ENCODE measurements at regions of chrX and their contacts with region 1.

Region 1: DNA sequence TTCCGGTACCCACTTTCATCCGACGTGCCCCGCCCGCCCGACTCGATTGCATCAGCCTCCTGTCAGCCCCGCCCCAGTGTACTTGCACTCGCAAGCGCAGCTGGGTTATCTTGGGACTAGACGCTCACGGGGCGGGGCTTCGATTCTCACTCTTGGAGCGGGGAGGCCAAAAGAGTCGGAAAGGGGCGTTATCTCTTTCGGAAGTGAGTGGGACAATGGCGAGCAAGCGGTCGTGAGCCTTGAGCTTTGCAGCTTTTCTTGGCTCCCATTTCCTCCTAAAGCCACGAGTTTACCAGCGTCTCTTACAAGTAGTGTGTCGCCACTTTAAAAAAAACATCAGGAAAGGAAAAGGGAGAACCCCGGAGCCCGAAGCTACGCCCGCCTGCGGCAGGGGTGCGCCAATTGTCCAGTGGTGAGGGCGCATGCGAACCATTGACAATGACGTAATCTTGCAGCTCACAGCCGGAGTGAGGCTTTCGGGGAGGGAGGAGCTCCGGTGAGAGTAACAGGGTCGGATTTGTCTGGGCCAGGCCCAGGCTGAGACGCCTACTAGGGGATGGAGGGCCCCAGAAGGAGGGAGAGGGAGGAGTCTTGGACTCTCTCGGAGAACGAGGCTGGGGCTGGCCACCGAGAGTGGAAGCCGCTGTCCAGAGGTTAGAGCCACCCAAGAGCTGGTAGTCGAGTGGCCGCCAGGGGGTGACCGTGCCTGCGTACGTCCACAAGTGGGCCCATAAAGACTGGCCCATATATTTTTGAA is 109.5 kb downstream of the GNL3L start:
- DNase-seq: peak; percentile 82 to 96 (median 90)
- ATAC-seq: peak; percentile 88
- H3K4me3 ChIP-seq: peak overlapping the region; percentile 60
- H3K4me3 Mint-ChIP-seq: peak overlapping the region; percentile 94
- H3K27ac ChIP-seq: peak overlapping the region; percentile 93 to 95
- H3K27ac Mint-ChIP-seq: peak overlapping the region; percentile 98
- H3K4me1 ChIP-seq: peaks cover 14% of the 10 kb centered on the region
- H3K4me1 Mint-ChIP-seq: peaks cover 14% of the 10 kb centered on the region
- H3K27me3 ChIP-seq: no peaks in the 10 kb centered on the region
- H3K27me3 Mint-ChIP-seq: no peaks in the 10 kb centered on the region
- CTCF ChIP-seq: peak; percentile 47

Region 2: DNA sequence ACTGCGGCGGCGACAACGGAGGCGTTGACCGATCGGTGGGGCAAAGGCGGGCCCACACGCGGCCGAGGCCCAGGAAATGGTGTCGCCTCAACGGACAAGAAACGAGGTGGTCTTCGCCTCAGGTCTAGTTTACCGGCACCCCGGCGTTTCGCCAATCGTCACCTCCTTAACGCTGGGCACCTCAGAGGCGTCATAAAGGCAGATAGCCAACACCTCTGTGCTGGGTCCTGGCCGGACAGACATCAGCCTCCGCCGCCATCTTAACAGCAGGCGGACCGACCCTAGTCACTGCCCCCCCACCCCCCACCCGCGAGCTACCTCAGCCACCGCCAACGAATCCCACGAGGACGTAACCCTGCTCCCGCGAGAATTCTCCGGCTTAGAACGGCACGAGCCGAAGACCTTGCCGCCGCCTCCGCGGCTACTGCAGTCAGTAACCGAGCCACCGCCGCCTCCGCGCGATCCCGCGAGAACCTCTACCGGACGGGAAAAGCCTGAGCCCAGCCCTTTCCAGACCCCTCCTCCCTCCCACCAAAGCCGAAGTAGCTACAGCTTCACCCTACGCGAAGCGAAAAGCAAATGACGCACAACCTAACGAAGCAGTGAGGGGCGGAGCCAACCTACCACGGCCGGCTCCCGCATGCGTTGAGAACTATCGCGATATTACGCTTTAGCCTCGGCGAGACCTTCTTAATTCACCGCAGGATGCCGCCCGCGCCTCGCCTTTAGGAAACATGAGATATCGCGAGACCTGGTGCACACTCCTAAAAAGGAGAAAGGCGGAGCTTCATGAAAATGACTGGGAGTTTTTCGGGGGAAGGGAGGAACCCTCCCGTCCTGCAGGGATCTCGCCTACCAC is 955.7 kb before region 1 on chrX:
- CTCF ChIA-PET with region 1: interaction called, 3 read pairs
- POLR2A ChIA-PET with region 1: interaction called, 15 read pairs
- intact Hi-C with region 1: no loop called
- DNase-seq: peak; percentile 77 to 98 (median 86)
- ATAC-seq: peak; percentile 78
- H3K4me3 ChIP-seq: peak overlapping the region; percentile 90
- H3K4me3 Mint-ChIP-seq: peak overlapping the region; percentile 95
- H3K27ac ChIP-seq: peak overlapping the region; percentile 75 to 98
- H3K27ac Mint-ChIP-seq: peak overlapping the region; percentile 99
- H3K4me1 ChIP-seq: peaks cover 18% of the 10 kb centered on the region
- H3K4me1 Mint-ChIP-seq: peaks cover 63% of the 10 kb centered on the region
- H3K27me3 ChIP-seq: no peaks in the 10 kb centered on the region
- H3K27me3 Mint-ChIP-seq: no peaks in the 10 kb centered on the region
- CTCF ChIP-seq: no peak

Region 3: GRCh38 chrX:54439967-54440871 is 199.3 kb before region 1 on chrX and contains the start of gene TSR2:
- CTCF ChIA-PET with region 1: interaction called, 3 read pairs
- POLR2A ChIA-PET with region 1: interaction called, 26 read pairs
- intact Hi-C with region 1: loop called in 1 of 2 experiments (anchors 5 kb)
- DNase-seq: peak; percentile 58 to 90 (median 68)
- ATAC-seq: peak; percentile 96
- H3K4me3 ChIP-seq: peak within 1 kb of the TSS; percentile 87
- H3K4me3 Mint-ChIP-seq: peak within 1 kb of the TSS; percentile 95
- H3K27ac ChIP-seq: peak within 1 kb of the TSS; percentile 47 to 56
- H3K27ac Mint-ChIP-seq: peak within 1 kb of the TSS; percentile 85
- H3K4me1 ChIP-seq: peaks cover 25% of the 10 kb centered on the region
- H3K4me1 Mint-ChIP-seq: peaks cover 32% of the 10 kb centered on the region
- H3K27me3 ChIP-seq: no peaks in the 10 kb centered on the region
- H3K27me3 Mint-ChIP-seq: no peaks in the 10 kb centered on the region
- CTCF ChIP-seq: no peak
- total RNA-seq, gene TSR2: 36.3 to 36.5 TPM

Region 4: GRCh38 chrX:54786962-54787361 is 147.4 kb after region 1 on chrX:
- CTCF ChIA-PET with region 1: no interaction called
- POLR2A ChIA-PET with region 1: interaction called, 5 read pairs
- intact Hi-C with region 1: loop called in 1 of 2 experiments (anchors 5 kb)
- DNase-seq: peak; percentile 8 to 54 (median 32)
- ATAC-seq: peak; percentile 76
- H3K4me3 ChIP-seq: no peak overlapping the region
- H3K4me3 Mint-ChIP-seq: no peak overlapping the region
- H3K27ac ChIP-seq: no peak overlapping the region
- H3K27ac Mint-ChIP-seq: no peak overlapping the region
- H3K4me1 ChIP-seq: no peaks in the 10 kb centered on the region
- H3K4me1 Mint-ChIP-seq: no peaks in the 10 kb centered on the region
- H3K27me3 ChIP-seq: no peaks in the 10 kb centered on the region
- H3K27me3 Mint-ChIP-seq: no peaks in the 10 kb centered on the region
- CTCF ChIP-seq: peak; percentile 38

Region 5: DNA sequence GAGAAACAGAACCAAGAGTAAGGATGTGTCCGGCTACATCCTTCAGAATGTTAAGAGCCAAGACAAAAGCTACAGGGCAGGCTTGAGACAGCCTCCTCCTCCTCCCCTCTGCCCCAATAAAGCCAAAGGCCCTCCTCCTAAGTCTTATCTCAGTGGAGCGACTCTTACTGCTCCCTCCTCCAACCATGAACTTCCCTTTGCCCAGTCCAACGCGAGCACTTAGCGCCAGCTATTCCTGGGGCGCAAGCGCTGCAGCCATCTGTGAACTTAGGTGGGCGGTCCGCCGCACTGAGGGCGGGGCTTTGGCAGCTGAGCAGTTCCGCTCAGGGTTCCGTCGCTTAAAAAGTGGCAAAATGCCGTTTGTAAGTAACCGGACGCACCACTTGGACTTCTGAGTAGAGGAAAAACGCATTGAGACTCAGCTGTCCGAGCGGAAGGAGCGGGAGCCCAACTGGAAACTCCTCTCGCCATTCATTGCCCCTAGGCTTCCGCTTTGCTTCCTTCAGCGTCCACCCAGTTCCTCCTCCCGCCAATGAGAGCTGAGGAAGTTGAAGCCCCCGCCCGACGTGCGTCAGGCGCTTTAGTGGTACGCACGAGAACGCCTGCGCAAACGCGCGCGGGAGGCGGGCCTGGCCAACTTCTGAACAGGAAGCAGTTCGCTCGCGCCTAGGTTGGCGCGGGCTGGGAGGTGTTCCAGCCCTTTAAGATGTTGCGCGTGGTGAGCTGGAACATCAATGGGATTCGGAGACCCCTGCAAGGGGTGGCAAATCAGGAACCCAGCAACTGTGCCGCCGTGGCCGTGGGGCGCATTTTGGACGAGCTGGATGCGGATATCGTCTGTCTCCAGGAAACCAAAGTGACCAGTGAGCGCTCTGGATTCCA is 360.4 kb after region 1 on chrX and contains the start of gene APEX2:
- CTCF ChIA-PET with region 1: interaction called, 6 read pairs
- POLR2A ChIA-PET with region 1: interaction called, 13 read pairs
- intact Hi-C with region 1: loop called in 1 of 2 experiments (anchors 5 kb)
- DNase-seq: peak; percentile 72 to 95 (median 84)
- ATAC-seq: peak; percentile 94
- H3K4me3 ChIP-seq: peak within 1 kb of the TSS; percentile 89
- H3K4me3 Mint-ChIP-seq: peak within 1 kb of the TSS; percentile 96
- H3K27ac ChIP-seq: peak within 1 kb of the TSS; percentile 84 to 97
- H3K27ac Mint-ChIP-seq: peak within 1 kb of the TSS; percentile 97
- H3K4me1 ChIP-seq: peaks cover 20% of the 10 kb centered on the region
- H3K4me1 Mint-ChIP-seq: peaks cover 36% of the 10 kb centered on the region
- H3K27me3 ChIP-seq: no peaks in the 10 kb centered on the region
- H3K27me3 Mint-ChIP-seq: no peaks in the 10 kb centered on the region
- CTCF ChIP-seq: no peak
- total RNA-seq, gene APEX2: 6.4 to 7.2 TPM